Activated CD8-positive, alpha-beta T cell treated with anti-CD3 and anti-CD28 coated beads for 36 hours (primary cell): ENCODE measurements at regions of chr7 and their contacts with region 1.

Region 1: GRCh38 chr7:64625114-64626082 is 40.5 kb upstream of the ZNF107 start:
- DNase-seq: no peak
- ATAC-seq: peak; percentile 24
- H3K4me3 Mint-ChIP-seq: no peak overlapping the region
- H3K27ac Mint-ChIP-seq: no peak overlapping the region
- H3K4me1 Mint-ChIP-seq: no peaks in the 10 kb centered on the region
- H3K27me3 Mint-ChIP-seq: no peaks in the 10 kb centered on the region
- CTCF ChIP-seq: peak; percentile 89

Region 2: DNA sequence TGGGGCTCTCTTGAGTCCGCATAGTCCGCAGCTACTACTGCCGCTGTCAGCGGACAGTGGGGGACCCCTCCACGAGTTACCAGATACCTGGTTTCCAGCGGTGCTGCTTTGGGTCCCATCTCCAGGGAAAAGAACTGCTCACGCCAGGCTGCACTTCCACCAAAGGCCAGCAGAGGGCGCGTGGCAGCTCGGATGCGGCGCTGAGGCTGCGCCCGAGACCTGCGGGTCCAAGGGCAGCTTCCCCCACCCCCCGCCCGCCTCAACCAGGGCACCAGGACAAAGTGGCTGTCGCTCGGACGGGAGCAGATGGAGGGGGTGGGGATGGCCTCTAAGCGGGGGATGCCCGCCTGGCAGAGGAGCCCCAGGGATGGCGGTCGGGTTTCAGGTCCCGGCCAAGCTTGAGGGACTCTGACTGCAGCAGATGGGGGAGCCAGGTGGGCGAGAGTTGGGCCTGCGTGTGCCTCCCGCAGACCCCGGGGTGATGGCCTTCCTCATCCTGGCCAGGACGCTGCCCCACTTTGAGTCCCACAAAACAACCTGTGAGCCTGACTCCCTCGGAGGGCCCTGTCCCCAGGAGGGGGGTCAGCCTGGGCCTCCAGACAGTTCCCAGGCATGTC is 442.2 kb before region 1 on chr7:
- CTCF ChIA-PET with region 1: interaction called, 4 read pairs
- POLR2A ChIA-PET with region 1: no interaction called
- intact Hi-C with region 1: loop called (anchors 2 kb)
- DNase-seq: peak; percentile 47
- ATAC-seq: no peak
- H3K4me3 Mint-ChIP-seq: no peak overlapping the region
- H3K27ac Mint-ChIP-seq: no peak overlapping the region
- H3K4me1 Mint-ChIP-seq: no peaks in the 10 kb centered on the region
- H3K27me3 Mint-ChIP-seq: peaks cover 4% of the 10 kb centered on the region
- CTCF ChIP-seq: peak; percentile 84

Region 3: GRCh38 chr7:64551375-64552142 is 73.8 kb before region 1 on chr7:
- CTCF ChIA-PET with region 1: no interaction called
- POLR2A ChIA-PET with region 1: no interaction called
- intact Hi-C with region 1: no loop called
- DNase-seq: no peak
- ATAC-seq: no peak
- H3K4me3 Mint-ChIP-seq: no peak overlapping the region
- H3K27ac Mint-ChIP-seq: no peak overlapping the region
- H3K4me1 Mint-ChIP-seq: peaks cover 12% of the 10 kb centered on the region
- H3K27me3 Mint-ChIP-seq: no peaks in the 10 kb centered on the region
- CTCF ChIP-seq: no peak